CD4-positive, alpha-beta T cell (primary cell): ENCODE measurements at regions of chrX and their contacts with region 1.

Region 1: DNA sequence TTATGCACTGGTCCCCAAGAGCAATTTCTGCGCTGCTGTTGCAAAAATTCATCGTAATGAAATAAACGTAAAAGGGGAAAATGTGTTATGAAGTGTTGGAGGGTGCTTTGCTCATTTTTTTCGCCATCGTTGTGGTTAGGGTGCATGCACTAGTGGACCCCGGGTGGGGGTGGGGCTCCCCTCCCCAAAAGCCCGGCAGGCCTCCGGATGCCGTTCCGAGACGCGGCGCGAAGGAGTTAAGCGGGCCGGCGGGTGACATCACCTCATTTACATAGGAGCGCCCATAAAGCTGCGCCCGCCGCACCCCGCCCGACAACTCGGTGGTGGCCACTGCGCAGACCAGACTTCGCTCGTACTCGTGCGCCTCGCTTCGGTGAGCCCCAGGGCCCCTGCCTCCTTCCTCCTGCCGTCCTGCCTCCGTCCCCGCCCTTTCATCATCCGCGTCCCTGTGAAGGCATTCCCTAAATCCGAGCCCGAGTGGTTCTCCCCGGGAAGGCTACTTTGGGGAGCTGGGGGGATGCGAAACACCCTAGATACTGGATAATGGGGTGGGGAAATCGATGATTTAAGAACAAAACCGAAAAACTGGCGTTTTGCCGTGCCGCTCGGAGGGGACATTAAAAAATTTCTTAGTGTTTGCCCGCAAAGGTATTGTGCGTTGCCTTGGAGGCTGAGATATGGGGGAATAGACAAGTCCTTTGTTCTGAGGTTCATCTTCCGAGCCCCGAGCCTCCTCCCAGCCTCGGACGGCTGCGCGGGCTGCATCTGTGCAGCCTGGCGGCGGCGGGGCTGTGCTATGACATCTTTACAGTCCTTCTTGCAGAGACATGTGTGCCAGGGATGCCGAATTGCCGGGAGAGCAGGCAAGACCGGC is at the start of gene TMSB4X:
- DNase-seq: peak; percentile 70 to 90 (median 82)
- ATAC-seq: peak; percentile 35
- H3K4me3 ChIP-seq: peak within 1 kb of the TSS; percentile 98
- H3K4me3 Mint-ChIP-seq: peak within 1 kb of the TSS; percentile 100
- H3K27ac ChIP-seq: peak within 1 kb of the TSS; percentile 86 to 91
- H3K27ac Mint-ChIP-seq: peak within 1 kb of the TSS; percentile 95
- H3K4me1 ChIP-seq: peaks cover 29% of the 10 kb centered on the region
- H3K4me1 Mint-ChIP-seq: peaks cover 39% of the 10 kb centered on the region
- H3K27me3 ChIP-seq: no peaks in the 10 kb centered on the region
- H3K27me3 Mint-ChIP-seq: no peaks in the 10 kb centered on the region
- CTCF ChIP-seq: no peak
- total RNA-seq, gene TMSB4X: 2,621 to 2,738 TPM

Region 2: GRCh38 chrX:13000301-13000811 is 25.3 kb after region 1 on chrX:
- CTCF ChIA-PET with region 1: no interaction called
- POLR2A ChIA-PET with region 1: interaction called, 502 read pairs
- intact Hi-C with region 1: loop called in 1 of 2 experiments (anchors 2 kb)
- DNase-seq: peak in 7 of 14 experiments; percentile 35 to 76 (median 60)
- ATAC-seq: peak; percentile 47
- H3K4me3 ChIP-seq: peak overlapping the region; percentile 37
- H3K4me3 Mint-ChIP-seq: peak overlapping the region; percentile 89
- H3K27ac ChIP-seq: peak overlapping the region; percentile 72 to 85
- H3K27ac Mint-ChIP-seq: peak overlapping the region; percentile 90
- H3K4me1 ChIP-seq: peaks cover 56% of the 10 kb centered on the region
- H3K4me1 Mint-ChIP-seq: peaks cover 83% of the 10 kb centered on the region
- H3K27me3 ChIP-seq: no peaks in the 10 kb centered on the region
- H3K27me3 Mint-ChIP-seq: no peaks in the 10 kb centered on the region
- CTCF ChIP-seq: no peak

Region 3: GRCh38 chrX:13029341-13029740 is 54.3 kb after region 1 on chrX:
- CTCF ChIA-PET with region 1: interaction called, 3 read pairs
- POLR2A ChIA-PET with region 1: interaction called, 184 read pairs
- intact Hi-C with region 1: loop called in 1 of 2 experiments (anchors 5 kb)
- DNase-seq: peak in 7 of 14 experiments; percentile 9 to 56 (median 40)
- ATAC-seq: peak; percentile 42
- H3K4me3 ChIP-seq: no peak overlapping the region
- H3K4me3 Mint-ChIP-seq: peak overlapping the region; percentile 70
- H3K27ac ChIP-seq: peak overlapping the region; percentile 19 to 52
- H3K27ac Mint-ChIP-seq: peak overlapping the region; percentile 98
- H3K4me1 ChIP-seq: peaks cover 53% of the 10 kb centered on the region
- H3K4me1 Mint-ChIP-seq: peaks cover 83% of the 10 kb centered on the region
- H3K27me3 ChIP-seq: no peaks in the 10 kb centered on the region
- H3K27me3 Mint-ChIP-seq: no peaks in the 10 kb centered on the region
- CTCF ChIP-seq: no peak

Region 4: DNA sequence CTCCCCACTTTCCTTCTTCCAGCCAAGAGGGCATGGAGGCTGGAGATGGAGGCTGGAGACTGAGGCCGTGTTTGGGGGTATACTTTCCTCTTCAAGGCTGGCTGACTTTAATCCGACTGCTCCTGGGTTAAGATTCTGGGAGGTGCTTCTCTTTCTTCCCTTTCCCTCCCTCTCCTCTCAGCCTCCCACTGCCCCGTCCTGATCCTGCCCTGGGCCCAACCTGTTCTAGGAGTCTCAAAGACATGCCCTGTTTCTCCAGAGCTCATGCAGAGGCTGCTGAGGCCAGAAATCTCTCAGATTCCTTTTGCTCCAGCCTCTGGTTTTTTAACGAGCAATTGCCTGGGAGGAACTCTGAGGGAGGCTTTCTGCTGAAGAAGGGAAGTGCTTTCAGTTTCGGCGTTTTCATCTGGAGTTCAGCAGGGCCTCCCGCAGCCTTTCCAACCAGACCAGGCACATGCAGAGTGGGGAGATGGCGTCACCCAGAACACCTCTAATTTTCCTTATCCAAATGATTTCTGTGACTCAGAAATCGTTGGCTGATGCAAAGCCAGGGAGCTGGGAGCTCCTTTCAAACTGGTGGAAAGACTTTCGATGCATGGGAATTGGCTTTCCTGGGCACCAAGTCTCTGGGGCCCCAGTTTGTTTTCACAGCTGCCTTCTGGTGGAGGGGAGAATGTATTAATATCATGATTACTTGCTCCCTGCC is 103.9 kb after region 1 on chrX:
- CTCF ChIA-PET with region 1: no interaction called
- POLR2A ChIA-PET with region 1: interaction called, 1,205 read pairs
- intact Hi-C with region 1: no loop called
- DNase-seq: peak in 4 of 14 experiments; percentile 34 to 56 (median 48)
- ATAC-seq: no peak
- H3K4me3 ChIP-seq: peak overlapping the region; percentile 28
- H3K4me3 Mint-ChIP-seq: peak overlapping the region; percentile 62
- H3K27ac ChIP-seq: peak overlapping the region; percentile 62
- H3K27ac Mint-ChIP-seq: peak overlapping the region; percentile 95
- H3K4me1 ChIP-seq: peaks cover 76% of the 10 kb centered on the region
- H3K4me1 Mint-ChIP-seq: peaks cover 96% of the 10 kb centered on the region
- H3K27me3 ChIP-seq: no peaks in the 10 kb centered on the region
- H3K27me3 Mint-ChIP-seq: no peaks in the 10 kb centered on the region
- CTCF ChIP-seq: no peak

Region 5: DNA sequence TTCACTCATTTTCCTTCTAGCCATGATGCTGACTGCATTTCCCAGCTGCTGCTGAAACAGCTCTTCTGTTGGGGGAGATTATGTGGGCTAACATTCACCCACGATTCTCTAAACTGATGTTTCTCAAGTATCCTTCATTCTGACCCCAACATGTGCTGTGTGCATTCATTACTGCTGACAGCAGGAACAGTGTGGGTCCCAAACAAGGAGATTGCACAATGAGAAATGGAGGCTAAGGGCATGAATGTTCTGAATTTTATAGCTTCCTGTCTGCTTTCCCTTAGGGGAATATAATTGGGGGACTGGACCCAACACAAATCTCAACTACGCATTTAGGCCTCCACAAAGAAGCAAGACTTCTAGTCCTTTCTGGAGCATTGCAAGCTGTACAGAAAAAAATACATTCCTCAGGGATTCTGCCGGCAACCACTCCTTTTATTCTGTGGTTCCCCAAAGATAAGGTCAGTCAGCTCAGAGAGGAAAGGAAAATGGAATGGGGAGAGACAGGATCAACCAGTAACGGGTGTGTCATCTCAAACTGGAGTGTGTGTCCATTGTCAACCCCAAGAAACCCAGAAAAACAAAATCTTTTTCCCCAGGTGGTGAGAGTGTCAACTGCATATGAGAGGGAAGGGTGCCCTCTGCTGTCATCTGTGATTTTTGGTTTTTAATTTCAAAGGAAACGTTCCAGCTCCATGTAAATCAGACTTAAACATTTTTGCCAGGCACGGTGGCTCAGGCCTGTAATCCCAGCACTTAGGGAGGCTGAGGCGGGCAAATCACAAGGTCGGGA is 512.9 kb after region 1 on chrX:
- CTCF ChIA-PET with region 1: interaction called, 13 read pairs
- POLR2A ChIA-PET with region 1: interaction called, 43 read pairs
- intact Hi-C with region 1: no loop called
- DNase-seq: peak; percentile 2 to 76 (median 22)
- ATAC-seq: peak; percentile 87
- H3K4me3 ChIP-seq: no peak overlapping the region
- H3K4me3 Mint-ChIP-seq: no peak overlapping the region
- H3K27ac ChIP-seq: no peak overlapping the region
- H3K27ac Mint-ChIP-seq: peak overlapping the region; percentile 77
- H3K4me1 ChIP-seq: peaks cover 11% of the 10 kb centered on the region
- H3K4me1 Mint-ChIP-seq: peaks cover 29% of the 10 kb centered on the region
- H3K27me3 ChIP-seq: no peaks in the 10 kb centered on the region
- H3K27me3 Mint-ChIP-seq: no peaks in the 10 kb centered on the region
- CTCF ChIP-seq: peak; percentile 55